CD4-positive, alpha-beta memory T cell (primary cell): ENCODE measurements at regions of chr2 and their contacts with region 1.

Region 1: DNA sequence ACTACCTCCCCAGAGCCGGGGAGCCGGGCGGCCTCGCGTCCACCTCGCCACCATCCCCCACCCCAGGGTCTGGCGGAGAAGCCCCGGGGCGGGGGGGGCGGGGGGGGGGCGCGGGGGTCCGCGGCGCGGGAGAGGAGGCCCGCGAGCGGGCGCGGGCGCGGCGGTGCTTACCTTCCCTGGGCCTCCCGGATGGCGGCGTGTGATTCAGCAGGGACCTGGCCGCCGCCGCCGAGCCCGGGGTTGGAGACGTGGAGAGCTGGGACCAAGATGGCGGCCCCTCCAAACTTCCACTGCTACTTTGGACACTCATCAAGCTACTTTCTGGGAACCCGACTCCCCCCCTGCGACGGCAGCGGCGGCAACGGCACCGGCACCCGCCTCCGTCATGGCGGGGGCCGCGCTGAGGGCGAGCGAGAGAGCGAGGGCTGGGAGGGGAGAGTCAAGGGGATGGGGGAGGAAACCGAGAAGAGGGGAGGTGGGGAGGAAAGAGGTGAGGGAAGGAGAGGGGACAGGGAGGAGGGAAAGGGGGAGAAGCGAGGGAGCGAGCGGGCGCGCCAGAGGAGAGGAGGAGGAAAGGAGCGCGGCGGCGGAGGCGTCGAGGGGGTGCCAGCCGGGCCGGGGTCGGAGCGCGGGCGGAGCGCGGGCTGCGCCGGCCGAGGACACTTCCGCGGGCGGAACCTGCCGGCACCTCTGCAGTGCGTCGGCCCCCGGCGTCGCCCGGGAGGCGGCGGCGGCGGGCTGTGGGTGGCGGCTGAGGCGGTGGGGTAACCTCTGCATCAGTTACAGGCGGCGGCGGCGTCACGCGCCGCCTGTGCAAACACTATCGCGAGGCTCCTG is at the start of gene TLK1:
- DNase-seq: peak; percentile 78 to 84 (median 82)
- H3K4me3 ChIP-seq: peak within 1 kb of the TSS; percentile 78 to 95
- H3K4me3 Mint-ChIP-seq: peak within 1 kb of the TSS; percentile 94 to 99 (median 96)
- H3K27ac ChIP-seq: peak within 1 kb of the TSS; percentile 89
- H3K27ac Mint-ChIP-seq: peak within 1 kb of the TSS; percentile 93 to 98 (median 94)
- H3K4me1 ChIP-seq: peaks cover 72% of the 10 kb centered on the region
- H3K4me1 Mint-ChIP-seq: peaks cover 51 to 77% (median 61%) of the 10 kb centered on the region in 4 donors
- H3K27me3 ChIP-seq: no peaks in the 10 kb centered on the region
- H3K27me3 Mint-ChIP-seq: no peaks in the 10 kb centered on the region
- total RNA-seq, gene TLK1: 138 to 152 TPM

Region 2: DNA sequence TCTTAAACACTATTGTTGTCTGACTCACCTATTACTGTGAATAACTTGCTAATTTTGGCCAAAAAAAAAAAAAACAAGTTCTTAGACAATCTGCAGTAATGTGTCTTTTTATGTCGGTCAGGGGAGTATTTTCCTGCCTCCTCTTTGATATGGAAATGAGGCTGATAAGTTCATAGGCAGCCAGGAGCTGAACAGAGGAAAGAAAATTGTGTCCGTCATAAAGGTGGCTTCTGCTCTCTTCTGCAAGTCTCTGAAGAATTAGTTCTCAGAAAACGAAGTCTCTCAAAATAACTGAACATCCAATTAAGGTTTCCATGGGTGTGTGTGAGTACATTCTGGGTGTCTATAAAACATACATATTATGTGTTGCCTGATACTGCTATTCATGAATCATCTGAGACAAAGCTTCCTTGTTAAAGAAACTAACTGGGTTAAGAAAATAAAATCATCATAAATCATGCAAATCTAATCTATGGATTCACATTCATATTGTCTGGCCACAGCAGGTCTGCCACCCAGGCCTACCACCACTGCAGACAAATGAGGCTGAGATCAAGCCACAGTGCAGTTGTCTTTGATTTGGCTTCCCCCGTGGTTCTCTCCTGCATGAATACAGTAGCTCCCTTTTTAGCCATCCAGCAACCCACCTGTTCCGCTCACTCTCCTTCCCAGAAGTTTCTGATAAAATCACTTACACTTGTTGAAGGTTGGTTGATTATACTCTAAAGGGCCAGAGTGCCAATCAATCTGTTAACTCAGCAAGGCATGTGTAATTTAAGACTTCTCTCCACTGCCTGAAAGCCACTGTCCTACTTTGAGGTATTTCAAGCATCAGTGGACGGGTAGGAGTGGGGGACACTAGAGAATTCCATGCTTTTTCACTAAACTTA is 464.6 kb before region 1 on chr2:
- CTCF ChIA-PET with region 1: no interaction called
- POLR2A ChIA-PET with region 1: no interaction called
- intact Hi-C with region 1: no loop called
- DNase-seq: no peak
- H3K4me3 ChIP-seq: no peak overlapping the region
- H3K4me3 Mint-ChIP-seq: no peak overlapping the region
- H3K27ac ChIP-seq: no peak overlapping the region
- H3K27ac Mint-ChIP-seq: no peak overlapping the region
- H3K4me1 ChIP-seq: no peaks in the 10 kb centered on the region
- H3K4me1 Mint-ChIP-seq: no peaks in the 10 kb centered on the region
- H3K27me3 ChIP-seq: no peaks in the 10 kb centered on the region
- H3K27me3 Mint-ChIP-seq: peaks cover 10 to 14% of the 10 kb centered on the region in 2 donors

Region 3: GRCh38 chr2:171042253-171042969 is 117.9 kb before region 1 on chr2:
- CTCF ChIA-PET with region 1: no interaction called
- POLR2A ChIA-PET with region 1: no interaction called
- intact Hi-C with region 1: loop called (anchors 5 kb)
- DNase-seq: peak in 3 of 5 donors; percentile 6 to 21 (median 10)
- H3K4me3 ChIP-seq: no peak overlapping the region
- H3K4me3 Mint-ChIP-seq: peak overlapping the region; percentile 5 to 64 (median 35)
- H3K27ac ChIP-seq: peak overlapping the region; percentile 5
- H3K27ac Mint-ChIP-seq: peak overlapping the region; percentile 16 to 92 (median 85)
- H3K4me1 ChIP-seq: peaks cover 37% of the 10 kb centered on the region
- H3K4me1 Mint-ChIP-seq: peaks cover 28 to 39% (median 31%) of the 10 kb centered on the region in 4 donors
- H3K27me3 ChIP-seq: no peaks in the 10 kb centered on the region
- H3K27me3 Mint-ChIP-seq: no peaks in the 10 kb centered on the region

Region 4: GRCh38 chr2:171141320-171141719 is 19.0 kb before region 1 on chr2:
- CTCF ChIA-PET with region 1: interaction called, 5 read pairs
- POLR2A ChIA-PET with region 1: interaction called, 12 read pairs
- intact Hi-C with region 1: loop called (anchors 2 kb)
- DNase-seq: no peak
- H3K4me3 ChIP-seq: no peak overlapping the region
- H3K4me3 Mint-ChIP-seq: peak overlapping the region in 5 of 8 donors; percentile 1 to 44 (median 23)
- H3K27ac ChIP-seq: no peak overlapping the region
- H3K27ac Mint-ChIP-seq: peak overlapping the region in 1 of 7 donors; percentile 3
- H3K4me1 ChIP-seq: peaks cover 89% of the 10 kb centered on the region
- H3K4me1 Mint-ChIP-seq: peaks cover 53 to 87% (median 74%) of the 10 kb centered on the region in 4 donors
- H3K27me3 ChIP-seq: no peaks in the 10 kb centered on the region
- H3K27me3 Mint-ChIP-seq: no peaks in the 10 kb centered on the region

Region 5: GRCh38 chr2:171244970-171245782 is 84.8 kb after region 1 on chr2:
- CTCF ChIA-PET with region 1: interaction called, 5 read pairs
- POLR2A ChIA-PET with region 1: interaction called, 17 read pairs
- intact Hi-C with region 1: loop called (anchors 1 kb)
- DNase-seq: no peak
- H3K4me3 ChIP-seq: no peak overlapping the region
- H3K4me3 Mint-ChIP-seq: peak overlapping the region in 1 of 8 donors; percentile 21
- H3K27ac ChIP-seq: no peak overlapping the region
- H3K27ac Mint-ChIP-seq: peak overlapping the region in 2 of 7 donors; percentile 3 to 23
- H3K4me1 ChIP-seq: peaks cover 44% of the 10 kb centered on the region
- H3K4me1 Mint-ChIP-seq: peaks cover 39 to 59% (median 44%) of the 10 kb centered on the region in 4 donors
- H3K27me3 ChIP-seq: no peaks in the 10 kb centered on the region
- H3K27me3 Mint-ChIP-seq: no peaks in the 10 kb centered on the region

Region 6: GRCh38 chr2:171325886-171326585 is 165.7 kb after region 1 on chr2:
- CTCF ChIA-PET with region 1: interaction called, 6 read pairs
- POLR2A ChIA-PET with region 1: interaction called, 21 read pairs
- intact Hi-C with region 1: no loop called
- DNase-seq: peak in 4 of 5 donors; percentile 41 to 69 (median 54)
- H3K4me3 ChIP-seq: no peak overlapping the region
- H3K4me3 Mint-ChIP-seq: peak overlapping the region; percentile 33 to 82 (median 72)
- H3K27ac ChIP-seq: peak overlapping the region; percentile 44
- H3K27ac Mint-ChIP-seq: peak overlapping the region; percentile 58 to 93 (median 89)
- H3K4me1 ChIP-seq: peaks cover 36% of the 10 kb centered on the region
- H3K4me1 Mint-ChIP-seq: peaks cover 25 to 59% (median 41%) of the 10 kb centered on the region in 4 donors
- H3K27me3 ChIP-seq: no peaks in the 10 kb centered on the region
- H3K27me3 Mint-ChIP-seq: no peaks in the 10 kb centered on the region